CD8-positive, alpha-beta memory T cell (primary cell): ENCODE measurements at regions of chr6 and their contacts with region 1.

Region 1: GRCh38 chr6:109382576-109383437 is 540 bp upstream of the CD164 start:
- DNase-seq: peak; percentile 86 to 96 (median 95)
- H3K4me3 ChIP-seq: peak overlapping the region; percentile 88
- H3K4me3 Mint-ChIP-seq: peak overlapping the region; percentile 92 to 99 (median 97)
- H3K27ac ChIP-seq: peak overlapping the region; percentile 97
- H3K27ac Mint-ChIP-seq: peak overlapping the region; percentile 98 to 99 (median 99)
- H3K4me1 ChIP-seq: peaks cover 31% of the 10 kb centered on the region
- H3K4me1 Mint-ChIP-seq: peaks cover 34 to 43% (median 39%) of the 10 kb centered on the region in 3 donors
- H3K27me3 ChIP-seq: no peaks in the 10 kb centered on the region
- H3K27me3 Mint-ChIP-seq: peaks cover 2 to 3% of the 10 kb centered on the region in 2 donors

Region 2: DNA sequence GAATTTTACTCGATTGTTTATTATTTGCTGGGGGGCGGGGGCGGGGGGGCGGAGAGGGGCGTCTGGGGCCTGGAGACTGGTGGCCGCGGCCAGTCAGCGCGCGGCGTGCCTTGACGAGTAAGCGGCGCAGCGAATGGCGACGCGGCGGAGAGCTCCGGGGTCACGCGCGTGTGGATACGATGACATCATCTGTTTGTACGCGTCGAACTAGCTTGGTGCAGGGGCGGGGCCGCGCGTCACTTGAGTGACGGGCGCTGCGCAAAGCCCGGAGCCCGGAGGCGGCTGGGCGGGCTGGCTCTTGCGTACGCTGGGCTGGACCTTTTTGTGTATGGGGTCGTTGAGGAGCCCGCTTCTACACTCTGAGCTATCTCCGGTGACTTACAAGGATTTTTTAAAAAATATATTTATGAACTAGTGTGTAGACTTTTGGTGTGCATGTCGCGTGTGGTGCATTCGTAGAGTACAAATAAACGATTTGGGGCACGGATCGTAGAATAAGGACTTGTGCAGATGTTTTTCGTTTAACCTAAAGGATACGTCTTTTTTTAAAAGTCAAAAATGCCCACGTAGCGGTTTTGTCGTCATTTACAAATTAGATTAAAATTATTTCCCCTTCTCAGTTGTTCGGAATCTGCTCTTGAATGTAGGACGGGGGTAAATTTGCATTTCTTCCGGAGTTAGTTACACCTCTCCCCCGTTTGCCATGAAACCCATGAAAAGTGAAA is 824.3 kb before region 1 on chr6:
- CTCF ChIA-PET with region 1: no interaction called
- POLR2A ChIA-PET with region 1: interaction called, 31 read pairs
- DNase-seq: peak; percentile 95 to 99 (median 97)
- H3K4me3 ChIP-seq: peak overlapping the region; percentile 80
- H3K4me3 Mint-ChIP-seq: peak overlapping the region; percentile 96 to 100 (median 98)
- H3K27ac ChIP-seq: peak overlapping the region; percentile 99
- H3K27ac Mint-ChIP-seq: peak overlapping the region; percentile 98 to 100 (median 99)
- H3K4me1 ChIP-seq: peaks cover 26% of the 10 kb centered on the region
- H3K4me1 Mint-ChIP-seq: peaks cover 21 to 27% (median 21%) of the 10 kb centered on the region in 3 donors
- H3K27me3 ChIP-seq: no peaks in the 10 kb centered on the region
- H3K27me3 Mint-ChIP-seq: peaks cover 2 to 8% of the 10 kb centered on the region in 2 donors

Region 3: DNA sequence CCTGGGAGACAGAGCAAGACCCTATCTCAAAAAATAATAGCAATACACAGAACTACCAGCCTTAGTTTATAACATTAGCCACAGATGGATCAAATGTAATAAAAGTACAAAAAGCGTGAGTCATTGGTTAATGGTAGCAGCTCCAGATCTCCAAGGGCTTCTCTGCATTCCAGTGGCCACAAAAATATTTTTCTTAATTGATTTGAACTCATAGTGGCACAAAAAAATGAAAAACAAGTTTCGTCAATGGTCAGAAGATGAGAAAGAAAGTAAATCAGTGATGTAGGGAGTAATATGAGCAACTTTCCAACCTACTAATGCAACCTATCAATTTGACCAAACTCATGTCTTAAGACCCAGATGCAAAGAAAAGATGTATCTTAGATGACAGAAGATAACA is 207.9 kb before region 1 on chr6:
- CTCF ChIA-PET with region 1: no interaction called
- POLR2A ChIA-PET with region 1: no interaction called
- DNase-seq: no peak
- H3K4me3 ChIP-seq: no peak overlapping the region
- H3K4me3 Mint-ChIP-seq: no peak overlapping the region
- H3K27ac ChIP-seq: no peak overlapping the region
- H3K27ac Mint-ChIP-seq: no peak overlapping the region
- H3K4me1 ChIP-seq: no peaks in the 10 kb centered on the region
- H3K4me1 Mint-ChIP-seq: no peaks in the 10 kb centered on the region
- H3K27me3 ChIP-seq: no peaks in the 10 kb centered on the region
- H3K27me3 Mint-ChIP-seq: peaks cover 19 to 40% of the 10 kb centered on the region in 2 donors

Region 4: GRCh38 chr6:109187399-109188114 is 195.2 kb before region 1 on chr6:
- CTCF ChIA-PET with region 1: interaction called, 73 read pairs
- POLR2A ChIA-PET with region 1: interaction called, 15 read pairs
- DNase-seq: peak; percentile 42 to 71 (median 49)
- H3K4me3 ChIP-seq: no peak overlapping the region
- H3K4me3 Mint-ChIP-seq: no peak overlapping the region
- H3K27ac ChIP-seq: no peak overlapping the region
- H3K27ac Mint-ChIP-seq: no peak overlapping the region
- H3K4me1 ChIP-seq: no peaks in the 10 kb centered on the region
- H3K4me1 Mint-ChIP-seq: no peaks in the 10 kb centered on the region
- H3K27me3 ChIP-seq: no peaks in the 10 kb centered on the region
- H3K27me3 Mint-ChIP-seq: peaks cover 3 to 45% of the 10 kb centered on the region in 2 donors

Region 5: DNA sequence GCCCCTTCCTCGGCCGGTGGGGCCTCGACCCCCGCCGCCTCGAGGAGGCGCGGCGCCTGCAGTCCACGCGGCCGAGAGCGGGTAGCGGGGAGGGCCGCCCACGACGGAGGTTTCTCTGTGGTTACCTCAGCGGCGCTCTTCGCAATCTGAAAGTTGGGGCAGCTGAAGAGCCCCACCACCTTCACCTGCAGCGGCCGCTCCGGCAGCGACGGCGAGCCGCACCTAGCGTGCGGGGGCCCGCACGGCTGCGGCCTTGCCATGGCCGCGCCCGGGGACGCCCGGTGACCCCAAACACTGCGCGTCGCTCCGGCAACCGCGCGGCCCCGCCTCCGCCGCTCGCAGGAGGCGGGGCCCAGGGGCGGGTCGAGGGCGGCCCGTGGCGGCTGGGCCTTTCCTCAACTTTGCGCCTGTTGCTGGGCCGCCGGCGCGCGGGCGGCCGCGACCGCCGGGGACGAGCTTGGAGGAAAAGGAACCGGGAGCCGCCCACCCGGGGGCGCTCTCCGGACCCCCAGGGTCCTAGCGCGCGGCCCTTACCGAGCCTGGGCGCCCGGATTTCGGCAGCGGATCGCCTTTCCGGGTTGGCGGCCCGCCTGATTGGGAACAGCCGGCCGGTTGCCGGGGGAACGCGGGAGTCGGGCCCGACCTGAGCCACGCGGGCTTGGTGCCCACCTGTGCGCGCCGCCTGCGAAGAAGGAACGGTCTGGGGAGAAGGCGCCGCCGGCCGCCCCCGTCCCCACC is 57.7 kb after region 1 on chr6 and contains the starts of genes PPIL6 and SMPD2:
- CTCF ChIA-PET with region 1: interaction called, 49 read pairs
- POLR2A ChIA-PET with region 1: interaction called, 34 read pairs
- DNase-seq: peak; percentile 73 to 86 (median 79)
- H3K4me3 ChIP-seq: peak within 1 kb of the TSS; percentile 69
- H3K4me3 Mint-ChIP-seq: peak within 1 kb of the TSS; percentile 90 to 95 (median 93)
- H3K27ac ChIP-seq: peak within 1 kb of the TSS; percentile 90
- H3K27ac Mint-ChIP-seq: peak within 1 kb of the TSS; percentile 94 to 99 (median 96)
- H3K4me1 ChIP-seq: peaks cover 21% of the 10 kb centered on the region
- H3K4me1 Mint-ChIP-seq: peaks cover 22 to 32% (median 32%) of the 10 kb centered on the region in 3 donors
- H3K27me3 ChIP-seq: no peaks in the 10 kb centered on the region
- H3K27me3 Mint-ChIP-seq: peaks cover 0 to 3% of the 10 kb centered on the region in 2 donors
- total RNA-seq, gene PPIL6: 0.13 TPM in 1 of 2 experiments, not detected in the other
- total RNA-seq, gene SMPD2: 15.1 to 15.8 TPM

Region 6: GRCh38 chr6:109482905-109483735 is 100.3 kb after region 1 on chr6 and contains the start of gene ZBTB24:
- CTCF ChIA-PET with region 1: interaction called, 9 read pairs
- POLR2A ChIA-PET with region 1: interaction called, 17 read pairs
- DNase-seq: peak; percentile 85 to 93 (median 88)
- H3K4me3 ChIP-seq: peak within 1 kb of the TSS; percentile 88
- H3K4me3 Mint-ChIP-seq: peak within 1 kb of the TSS; percentile 92 to 99 (median 93)
- H3K27ac ChIP-seq: peak within 1 kb of the TSS; percentile 60
- H3K27ac Mint-ChIP-seq: peak within 1 kb of the TSS; percentile 83 to 95 (median 91)
- H3K4me1 ChIP-seq: peaks cover 42% of the 10 kb centered on the region
- H3K4me1 Mint-ChIP-seq: peaks cover 41 to 52% (median 52%) of the 10 kb centered on the region in 3 donors
- H3K27me3 ChIP-seq: no peaks in the 10 kb centered on the region
- H3K27me3 Mint-ChIP-seq: no peaks in the 10 kb centered on the region
- total RNA-seq, gene ZBTB24: 19.5 to 19.9 TPM

Region 7: GRCh38 chr6:109503327-109504224 is 120.8 kb after region 1 on chr6:
- CTCF ChIA-PET with region 1: no interaction called
- POLR2A ChIA-PET with region 1: no interaction called
- DNase-seq: no peak
- H3K4me3 ChIP-seq: no peak overlapping the region
- H3K4me3 Mint-ChIP-seq: no peak overlapping the region
- H3K27ac ChIP-seq: no peak overlapping the region
- H3K27ac Mint-ChIP-seq: no peak overlapping the region
- H3K4me1 ChIP-seq: no peaks in the 10 kb centered on the region
- H3K4me1 Mint-ChIP-seq: no peaks in the 10 kb centered on the region
- H3K27me3 ChIP-seq: no peaks in the 10 kb centered on the region
- H3K27me3 Mint-ChIP-seq: peaks cover 5 to 6% of the 10 kb centered on the region in 2 donors